Activated B cell treated with CpG ODN at 0.5 μM for 24 hours (primary cell): ENCODE measurements at regions of chr1 and their contacts with region 1.

Region 1: GRCh38 chr1:92944901-92945747 is 16.1 kb downstream of the DIPK1A start:
- DNase-seq: no peak
- ATAC-seq: peak; percentile 75
- H3K4me3 Mint-ChIP-seq: peak overlapping the region; percentile 66
- H3K27ac Mint-ChIP-seq: peak overlapping the region; percentile 80
- H3K4me1 Mint-ChIP-seq: peaks cover 75% of the 10 kb centered on the region
- H3K27me3 Mint-ChIP-seq: no peaks in the 10 kb centered on the region
- CTCF ChIP-seq: no peak

Region 2: GRCh38 chr1:91912267-91912666 is 1032.9 kb before region 1 on chr1:
- CTCF ChIA-PET with region 1: no interaction called
- POLR2A ChIA-PET with region 1: no interaction called
- intact Hi-C with region 1: no loop called
- DNase-seq: no peak
- ATAC-seq: no peak
- H3K4me3 Mint-ChIP-seq: no peak overlapping the region
- H3K27ac Mint-ChIP-seq: no peak overlapping the region
- H3K4me1 Mint-ChIP-seq: no peaks in the 10 kb centered on the region
- H3K27me3 Mint-ChIP-seq: no peaks in the 10 kb centered on the region
- CTCF ChIP-seq: no peak

Region 3: GRCh38 chr1:92527670-92528069 is 417.5 kb before region 1 on chr1:
- CTCF ChIA-PET with region 1: no interaction called
- POLR2A ChIA-PET with region 1: no interaction called
- intact Hi-C with region 1: no loop called
- DNase-seq: no peak
- ATAC-seq: no peak
- H3K4me3 Mint-ChIP-seq: no peak overlapping the region
- H3K27ac Mint-ChIP-seq: no peak overlapping the region
- H3K4me1 Mint-ChIP-seq: no peaks in the 10 kb centered on the region
- H3K27me3 Mint-ChIP-seq: no peaks in the 10 kb centered on the region
- CTCF ChIP-seq: no peak

Region 4: DNA sequence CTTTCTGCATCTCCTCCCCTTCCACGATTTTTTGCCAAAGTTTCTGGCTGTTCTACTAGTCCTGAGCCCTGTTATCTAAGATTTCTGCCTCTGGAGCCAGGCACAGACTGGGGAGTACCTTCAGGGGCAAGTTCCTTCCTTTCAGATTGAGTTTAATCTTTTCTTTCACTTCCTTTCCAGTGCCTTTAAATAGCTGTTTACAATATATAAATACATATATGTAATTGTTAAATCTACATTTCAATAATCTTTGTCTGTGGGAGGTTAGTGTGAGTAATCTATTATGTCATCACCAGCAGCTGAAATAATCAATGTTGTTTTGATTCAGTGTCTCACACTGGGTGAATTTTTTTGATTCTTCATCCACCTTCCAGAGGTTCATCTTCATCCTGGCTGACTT is 15.7 kb before region 1 on chr1:
- CTCF ChIA-PET with region 1: interaction called, 3 read pairs
- POLR2A ChIA-PET with region 1: no interaction called
- intact Hi-C with region 1: loop called (anchors 2 kb)
- DNase-seq: no peak
- ATAC-seq: peak; percentile 50
- H3K4me3 Mint-ChIP-seq: peak overlapping the region; percentile 62
- H3K27ac Mint-ChIP-seq: peak overlapping the region; percentile 80
- H3K4me1 Mint-ChIP-seq: peaks cover 83% of the 10 kb centered on the region
- H3K27me3 Mint-ChIP-seq: no peaks in the 10 kb centered on the region
- CTCF ChIP-seq: no peak